ENCODE measurements at regions of chr14 and their contacts with region 1.

Region 1: GRCh38 chr14:39015360-39015961 is 87.6 kb downstream of the SEC23A start:
- DNase-seq: peak in 1 of 2 donors; percentile 55
- ATAC-seq: peak in 1 of 3 donors; percentile 61
- H3K4me3 ChIP-seq: no peak overlapping the region
- H3K4me3 Mint-ChIP-seq: no peak overlapping the region
- H3K27ac ChIP-seq: no peak overlapping the region
- H3K27ac Mint-ChIP-seq: no peak overlapping the region
- H3K4me1 ChIP-seq: no peaks in the 10 kb centered on the region
- H3K4me1 Mint-ChIP-seq: peaks cover 0 to 5% of the 10 kb centered on the region in 2 donors
- H3K27me3 ChIP-seq: no peaks in the 10 kb centered on the region
- H3K27me3 Mint-ChIP-seq: no peaks in the 10 kb centered on the region
- CTCF ChIP-seq: peak; percentile 69

Region 2: DNA sequence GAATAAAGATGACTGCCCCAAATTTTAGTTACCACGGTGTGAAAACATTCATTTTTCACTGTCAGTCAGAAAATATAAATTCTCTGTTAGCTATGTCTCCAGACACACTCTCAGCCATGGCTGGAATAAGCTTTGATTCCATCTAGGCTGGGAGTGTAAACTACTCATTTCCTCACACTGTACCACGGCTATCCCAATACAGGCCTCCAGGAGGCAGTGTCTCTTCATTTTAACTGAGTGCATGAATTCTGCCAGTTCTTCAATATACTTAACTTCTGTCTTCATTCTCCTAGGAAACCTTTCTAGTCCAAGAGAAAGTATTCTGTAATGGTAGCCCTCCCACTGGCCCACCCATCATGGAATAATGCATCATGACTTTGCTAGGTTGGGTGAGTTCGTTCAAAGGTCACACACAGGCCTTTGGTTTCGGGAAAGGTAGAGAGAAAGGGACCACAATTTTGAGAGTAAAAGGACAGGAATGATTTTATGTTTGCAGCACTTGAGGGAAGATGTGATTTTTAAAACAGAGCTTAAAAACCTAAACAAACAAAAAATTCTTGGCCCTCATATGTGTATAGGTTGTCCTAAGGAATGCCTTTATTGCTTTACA is 293.5 kb before region 1 on chr14:
- intact Hi-C with region 1: loop called (anchors 5 kb)
- DNase-seq: peak in 1 of 2 donors; percentile 32
- ATAC-seq: peak in 2 of 3 donors; percentile 31 to 62
- H3K4me3 ChIP-seq: no peak overlapping the region
- H3K4me3 Mint-ChIP-seq: no peak overlapping the region
- H3K27ac ChIP-seq: no peak overlapping the region
- H3K27ac Mint-ChIP-seq: no peak overlapping the region
- H3K4me1 ChIP-seq: no peaks in the 10 kb centered on the region
- H3K4me1 Mint-ChIP-seq: no peaks in the 10 kb centered on the region
- H3K27me3 ChIP-seq: no peaks in the 10 kb centered on the region
- H3K27me3 Mint-ChIP-seq: peaks cover 0 to 4% of the 10 kb centered on the region in 2 donors
- CTCF ChIP-seq: peak; percentile 24

Region 3: GRCh38 chr14:38755036-38755435 is 260.4 kb before region 1 on chr14:
- intact Hi-C with region 1: no loop called
- DNase-seq: no peak
- ATAC-seq: no peak
- H3K4me3 ChIP-seq: no peak overlapping the region
- H3K4me3 Mint-ChIP-seq: no peak overlapping the region
- H3K27ac ChIP-seq: no peak overlapping the region
- H3K27ac Mint-ChIP-seq: no peak overlapping the region
- H3K4me1 ChIP-seq: no peaks in the 10 kb centered on the region
- H3K4me1 Mint-ChIP-seq: no peaks in the 10 kb centered on the region
- H3K27me3 ChIP-seq: no peaks in the 10 kb centered on the region
- H3K27me3 Mint-ChIP-seq: no peaks in the 10 kb centered on the region
- CTCF ChIP-seq: no peak